ENCODE measurements at regions of chr10 and their contacts with region 1.

Region 1: GRCh38 chr10:124092860-124093773 is at the start of gene CHST15:
- DNase-seq: peak; percentile 90
- H3K4me3 ChIP-seq: peak within 1 kb of the TSS; percentile 75 to 87 (median 82)
- H3K27ac ChIP-seq: peak within 1 kb of the TSS; percentile 81
- H3K4me1 ChIP-seq: peaks cover 16% of the 10 kb centered on the region
- H3K27me3 ChIP-seq: no peaks in the 10 kb centered on the region
- CTCF ChIP-seq: peak in 1 of 2 donors; percentile 28
- total RNA-seq, gene CHST15: 47.3 to 61.0 TPM

Region 2: GRCh38 chr10:124049484-124049883 is 43.6 kb before region 1 on chr10:
- CTCF ChIA-PET with region 1: no interaction called
- dilution Hi-C with region 1: no loop called
- in situ Hi-C with region 1: no loop called
- intact Hi-C with region 1: loop called (anchors 2 kb)
- DNase-seq: peak; percentile 82
- H3K4me3 ChIP-seq: no peak overlapping the region
- H3K27ac ChIP-seq: no peak overlapping the region
- H3K4me1 ChIP-seq: peaks cover 29% of the 10 kb centered on the region
- H3K27me3 ChIP-seq: no peaks in the 10 kb centered on the region
- CTCF ChIP-seq: no peak

Region 3: DNA sequence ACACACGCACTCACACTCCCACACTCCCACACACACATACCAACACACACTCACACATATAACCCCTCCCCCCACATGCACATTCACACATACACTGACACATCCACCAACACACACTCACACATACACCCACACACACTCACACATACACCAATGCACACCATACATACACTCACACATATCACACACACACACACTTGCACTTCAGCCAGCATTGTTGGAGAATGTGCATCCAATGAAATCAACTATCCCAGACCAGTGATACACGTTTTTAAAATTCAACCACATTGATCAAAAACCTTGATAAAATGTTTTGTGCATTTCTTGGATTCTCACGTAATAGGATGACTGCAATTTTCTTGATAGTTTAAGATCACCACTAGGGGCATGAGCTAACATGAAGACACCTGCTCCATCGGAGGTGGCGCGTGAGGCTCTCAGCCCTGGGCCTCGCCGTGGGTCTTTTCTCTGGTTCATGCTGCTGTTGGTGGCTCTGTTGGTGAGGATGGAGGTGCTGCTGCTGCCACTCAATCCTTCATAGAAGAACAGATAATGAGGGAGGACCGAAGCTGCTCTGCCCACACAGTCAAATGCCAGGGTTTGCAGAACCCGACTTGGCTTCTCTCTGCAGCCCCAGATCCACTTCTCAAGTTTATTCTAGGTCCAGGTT is 32.5 kb after region 1 on chr10:
- CTCF ChIA-PET with region 1: no interaction called
- dilution Hi-C with region 1: no loop called
- in situ Hi-C with region 1: no loop called
- intact Hi-C with region 1: loop called (anchors 2 kb)
- DNase-seq: peak; percentile 57
- H3K4me3 ChIP-seq: no peak overlapping the region
- H3K27ac ChIP-seq: no peak overlapping the region
- H3K4me1 ChIP-seq: peaks cover 4% of the 10 kb centered on the region
- H3K27me3 ChIP-seq: no peaks in the 10 kb centered on the region
- CTCF ChIP-seq: peak; percentile 47 to 59

Region 4: DNA sequence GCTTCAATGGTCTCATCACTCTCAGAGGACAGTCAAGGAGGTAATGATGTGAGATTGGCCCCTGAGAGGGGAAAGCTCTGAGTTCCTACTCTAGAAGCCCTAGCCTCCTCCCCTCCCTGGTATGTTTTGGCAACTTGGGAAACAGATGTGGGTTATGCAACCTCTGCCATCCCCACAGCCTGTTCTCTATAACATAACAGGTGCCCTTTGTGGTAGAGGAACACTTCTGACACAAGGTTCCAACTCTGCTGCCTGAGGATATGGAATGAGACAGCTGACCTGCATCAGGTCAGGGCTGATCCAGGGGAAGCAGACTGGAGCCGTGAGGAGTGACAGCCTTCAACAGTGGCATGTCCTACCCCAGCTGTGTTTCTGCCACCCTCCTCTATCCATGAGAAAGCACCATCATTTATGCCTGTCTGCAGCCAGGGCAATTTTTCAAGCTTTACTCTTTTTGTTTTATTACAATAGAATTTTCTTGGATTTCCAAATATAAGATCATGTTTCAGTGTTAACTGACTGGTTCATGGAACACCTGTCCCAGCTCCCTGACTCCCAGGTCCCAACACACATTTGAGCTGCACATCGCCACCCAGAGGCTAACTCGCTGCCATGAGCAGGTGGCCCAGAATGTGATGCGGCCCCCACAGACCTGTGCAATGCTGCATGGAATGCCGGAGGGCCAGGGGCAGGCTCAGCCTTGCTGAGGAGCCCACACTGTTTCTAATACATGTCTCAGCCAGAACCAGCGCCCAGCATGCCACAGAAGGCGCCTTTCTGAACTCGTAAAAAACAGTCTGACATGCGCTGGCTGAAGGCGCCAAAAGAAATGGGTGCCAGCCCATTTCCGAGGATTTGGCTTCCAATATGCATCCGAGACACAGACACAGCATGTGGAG is 125.0 kb after region 1 on chr10:
- CTCF ChIA-PET with region 1: no interaction called
- dilution Hi-C with region 1: no loop called
- in situ Hi-C with region 1: no loop called
- intact Hi-C with region 1: loop called (anchors 10 kb)
- DNase-seq: peak; percentile 64
- H3K4me3 ChIP-seq: no peak overlapping the region
- H3K27ac ChIP-seq: no peak overlapping the region
- H3K4me1 ChIP-seq: peaks cover 30% of the 10 kb centered on the region
- H3K27me3 ChIP-seq: no peaks in the 10 kb centered on the region
- CTCF ChIP-seq: peak; percentile 28 to 40

Region 5: GRCh38 chr10:124388823-124389612 is 295.9 kb after region 1 on chr10:
- CTCF ChIA-PET with region 1: no interaction called
- dilution Hi-C with region 1: no loop called
- in situ Hi-C with region 1: loop called in 1 of 2 experiments (anchors 25 kb)
- intact Hi-C with region 1: loop called (anchors 1 kb)
- DNase-seq: peak; percentile 72
- H3K4me3 ChIP-seq: peak overlapping the region; percentile 14 to 33 (median 17)
- H3K27ac ChIP-seq: no peak overlapping the region
- H3K4me1 ChIP-seq: peaks cover 13% of the 10 kb centered on the region
- H3K27me3 ChIP-seq: no peaks in the 10 kb centered on the region
- CTCF ChIP-seq: peak; percentile 62 to 91

Measured in mammary epithelial cell (primary cell).